Mammary epithelial cell (primary cell): ENCODE measurements at regions of chr7 and their contacts with region 1.

Region 1: DNA sequence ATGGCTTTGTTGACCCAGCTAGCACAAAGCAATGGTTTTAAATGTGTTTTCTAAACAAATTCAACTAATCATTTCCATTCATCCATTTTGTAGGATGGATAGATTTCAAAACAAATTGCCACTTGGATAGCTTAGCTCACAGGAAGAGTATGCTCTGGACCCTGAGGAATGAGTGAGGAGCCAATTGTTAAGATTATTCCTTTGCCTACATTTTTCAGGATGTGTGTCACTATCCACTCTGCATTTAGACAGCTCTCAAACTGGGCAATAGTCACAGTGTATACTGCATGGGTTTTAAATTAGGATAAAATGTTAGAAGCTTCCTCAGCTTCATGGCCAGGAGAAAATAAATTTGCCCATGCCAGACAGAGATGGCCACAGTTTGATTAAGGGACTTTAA is 605.6 kb upstream of the TEX47 start:
- DNase-seq: no peak
- H3K4me3 ChIP-seq: no peak overlapping the region
- H3K27ac ChIP-seq: no peak overlapping the region
- H3K4me1 ChIP-seq: no peaks in the 10 kb centered on the region
- H3K27me3 ChIP-seq: no peaks in the 10 kb centered on the region
- CTCF ChIP-seq: no peak

Region 2: DNA sequence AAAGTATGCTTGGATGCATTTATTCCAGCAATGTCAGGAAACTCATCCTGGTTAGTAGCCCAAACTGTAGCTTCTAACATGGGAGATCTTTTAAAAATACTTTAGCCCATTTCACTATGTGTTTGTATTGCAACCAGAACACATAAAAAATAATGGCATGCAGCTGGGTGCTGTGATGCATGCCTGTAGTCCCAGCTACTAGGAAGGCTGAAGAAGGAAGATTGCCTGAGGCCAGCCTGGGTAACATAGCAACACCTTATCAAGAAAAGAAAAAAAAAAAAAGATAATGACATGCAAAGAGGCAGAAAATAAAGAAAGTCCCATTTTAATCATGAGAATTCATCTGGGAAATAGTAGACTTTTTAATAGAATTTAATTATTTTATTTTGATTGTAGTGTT is 88.5 kb before region 1 on chr7:
- CTCF ChIA-PET with region 1: no interaction called
- dilution Hi-C with region 1: no loop called
- in situ Hi-C with region 1: loop called in 1 of 2 experiments (anchors 25 kb)
- intact Hi-C with region 1: no loop called
- DNase-seq: no peak
- H3K4me3 ChIP-seq: no peak overlapping the region
- H3K27ac ChIP-seq: no peak overlapping the region
- H3K4me1 ChIP-seq: no peaks in the 10 kb centered on the region
- H3K27me3 ChIP-seq: no peaks in the 10 kb centered on the region
- CTCF ChIP-seq: no peak